CD4-positive, alpha-beta memory T cell (primary cell): ENCODE measurements at regions of chr16 and their contacts with region 1.

Region 1: GRCh38 chr16:28166394-28167208 is 45.2 kb downstream of the XPO6 start:
- DNase-seq: no peak
- H3K4me3 ChIP-seq: no peak overlapping the region
- H3K4me3 Mint-ChIP-seq: peak overlapping the region in 5 of 8 donors; percentile 6 to 75 (median 51)
- H3K27ac ChIP-seq: no peak overlapping the region
- H3K27ac Mint-ChIP-seq: peak overlapping the region; percentile 45 to 93 (median 72)
- H3K4me1 ChIP-seq: peaks cover 86% of the 10 kb centered on the region
- H3K4me1 Mint-ChIP-seq: peaks cover 51 to 85% (median 72%) of the 10 kb centered on the region in 4 donors
- H3K27me3 ChIP-seq: no peaks in the 10 kb centered on the region
- H3K27me3 Mint-ChIP-seq: no peaks in the 10 kb centered on the region

Region 2: GRCh38 chr16:28098959-28099945 is 67.3 kb before region 1 on chr16:
- CTCF ChIA-PET with region 1: no interaction called
- POLR2A ChIA-PET with region 1: no interaction called
- intact Hi-C with region 1: no loop called
- DNase-seq: no peak
- H3K4me3 ChIP-seq: no peak overlapping the region
- H3K4me3 Mint-ChIP-seq: no peak overlapping the region
- H3K27ac ChIP-seq: no peak overlapping the region
- H3K27ac Mint-ChIP-seq: peak overlapping the region in 1 of 7 donors; percentile 41
- H3K4me1 ChIP-seq: no peaks in the 10 kb centered on the region
- H3K4me1 Mint-ChIP-seq: peaks cover 0 to 6% (median 3%) of the 10 kb centered on the region in 4 donors
- H3K27me3 ChIP-seq: no peaks in the 10 kb centered on the region
- H3K27me3 Mint-ChIP-seq: no peaks in the 10 kb centered on the region

Region 3: DNA sequence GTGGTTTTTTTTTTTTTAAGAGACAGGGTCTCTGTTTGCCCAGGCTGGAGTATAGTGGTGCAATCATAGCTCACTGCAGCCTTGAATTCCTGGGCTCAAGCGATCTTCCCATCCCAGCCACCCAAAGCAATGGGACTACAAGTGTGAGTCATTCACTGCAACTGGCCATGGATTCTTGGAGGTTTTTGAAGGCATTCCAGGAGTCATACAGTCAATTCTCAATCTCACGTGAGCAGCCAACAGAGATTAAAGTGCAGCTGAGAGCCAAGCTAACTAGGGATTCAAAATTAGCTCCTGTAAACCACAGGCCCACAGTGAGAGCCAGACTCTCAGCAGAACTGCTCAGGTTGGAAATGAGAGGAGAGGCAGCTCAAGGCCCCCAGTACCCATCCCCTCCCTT is 14.9 kb after region 1 on chr16:
- CTCF ChIA-PET with region 1: interaction called, 4 read pairs
- POLR2A ChIA-PET with region 1: interaction called, 7 read pairs
- intact Hi-C with region 1: loop called (anchors 1 kb)
- DNase-seq: no peak
- H3K4me3 ChIP-seq: no peak overlapping the region
- H3K4me3 Mint-ChIP-seq: peak overlapping the region in 7 of 8 donors; percentile 55 to 88 (median 72)
- H3K27ac ChIP-seq: peak overlapping the region; percentile 38
- H3K27ac Mint-ChIP-seq: peak overlapping the region; percentile 79 to 96 (median 94)
- H3K4me1 ChIP-seq: peaks cover 82% of the 10 kb centered on the region
- H3K4me1 Mint-ChIP-seq: peaks cover 66 to 94% (median 80%) of the 10 kb centered on the region in 4 donors
- H3K27me3 ChIP-seq: no peaks in the 10 kb centered on the region
- H3K27me3 Mint-ChIP-seq: no peaks in the 10 kb centered on the region

Region 4: GRCh38 chr16:28188085-28188916 is 21.7 kb after region 1 on chr16:
- CTCF ChIA-PET with region 1: interaction called, 5 read pairs
- POLR2A ChIA-PET with region 1: interaction called, 33 read pairs
- intact Hi-C with region 1: loop called (anchors 1 kb)
- DNase-seq: peak in 1 of 5 donors; percentile 32
- H3K4me3 ChIP-seq: no peak overlapping the region
- H3K4me3 Mint-ChIP-seq: peak overlapping the region; percentile 67 to 89 (median 80)
- H3K27ac ChIP-seq: peak overlapping the region; percentile 50
- H3K27ac Mint-ChIP-seq: peak overlapping the region; percentile 91 to 98 (median 93)
- H3K4me1 ChIP-seq: peaks cover 97% of the 10 kb centered on the region
- H3K4me1 Mint-ChIP-seq: peaks cover 75 to 97% (median 87%) of the 10 kb centered on the region in 4 donors
- H3K27me3 ChIP-seq: no peaks in the 10 kb centered on the region
- H3K27me3 Mint-ChIP-seq: no peaks in the 10 kb centered on the region

Region 5: DNA sequence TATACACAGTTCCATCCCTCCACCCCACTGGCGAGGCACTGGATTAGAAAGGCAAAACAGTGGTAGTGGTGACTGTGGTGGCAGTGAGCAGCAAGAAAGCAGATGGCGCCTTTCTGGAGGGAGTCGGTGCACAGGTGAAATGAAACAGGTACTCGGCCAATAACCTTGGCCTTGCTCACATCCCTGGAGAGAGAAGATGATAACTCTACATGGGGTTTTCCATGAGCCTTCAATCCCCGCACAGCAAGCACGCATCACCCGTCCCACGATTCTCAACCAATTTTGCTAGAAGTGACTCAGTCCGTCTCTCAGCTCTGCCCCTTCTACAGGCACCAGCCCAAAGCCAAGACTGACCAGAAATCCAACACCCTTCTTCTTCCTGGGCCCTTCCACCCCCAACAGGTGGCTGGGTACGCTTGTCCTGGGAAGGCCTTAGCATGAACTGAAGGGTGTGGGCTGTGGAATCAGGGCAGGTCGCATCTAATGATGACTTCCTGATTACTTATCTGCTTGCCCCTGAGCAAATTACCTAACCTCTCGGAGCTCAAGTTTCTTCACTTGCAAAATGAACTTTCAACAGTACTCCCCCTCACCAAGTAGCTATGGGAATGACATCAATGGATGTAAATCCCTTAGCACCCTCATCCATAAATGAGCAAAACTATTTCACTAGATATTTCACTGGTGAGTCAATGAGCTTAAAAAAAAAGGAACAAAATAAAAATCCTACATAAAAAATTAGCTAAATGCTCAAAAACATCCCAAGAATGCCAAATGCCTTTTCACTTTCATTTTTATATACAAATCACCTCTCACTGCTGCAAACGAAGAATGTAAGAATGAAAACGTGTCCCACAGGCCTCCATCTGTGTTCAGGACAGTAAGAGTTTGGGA is 27.2 kb after region 1 on chr16:
- CTCF ChIA-PET with region 1: interaction called, 5 read pairs
- POLR2A ChIA-PET with region 1: interaction called, 33 read pairs
- intact Hi-C with region 1: loop called (anchors 2 kb)
- DNase-seq: peak in 2 of 5 donors; percentile 42 to 80
- H3K4me3 ChIP-seq: peak overlapping the region; percentile 18 to 53
- H3K4me3 Mint-ChIP-seq: peak overlapping the region; percentile 76 to 91 (median 84)
- H3K27ac ChIP-seq: peak overlapping the region; percentile 88
- H3K27ac Mint-ChIP-seq: peak overlapping the region; percentile 94 to 99 (median 98)
- H3K4me1 ChIP-seq: peaks cover 87% of the 10 kb centered on the region
- H3K4me1 Mint-ChIP-seq: peaks cover 62 to 85% (median 75%) of the 10 kb centered on the region in 4 donors
- H3K27me3 ChIP-seq: no peaks in the 10 kb centered on the region
- H3K27me3 Mint-ChIP-seq: no peaks in the 10 kb centered on the region